ENCODE measurements at regions of chr1 and their contacts with region 1.

Region 1: GRCh38 chr1:23664837-23665795 is 26.5 kb upstream of the RPL11 start:
- DNase-seq: no peak
- ATAC-seq: no peak
- H3K4me3 Mint-ChIP-seq: no peak overlapping the region
- H3K27ac Mint-ChIP-seq: no peak overlapping the region
- H3K4me1 Mint-ChIP-seq: peaks cover 4% of the 10 kb centered on the region
- H3K27me3 Mint-ChIP-seq: peaks cover 3% of the 10 kb centered on the region
- CTCF ChIP-seq: no peak

Region 2: DNA sequence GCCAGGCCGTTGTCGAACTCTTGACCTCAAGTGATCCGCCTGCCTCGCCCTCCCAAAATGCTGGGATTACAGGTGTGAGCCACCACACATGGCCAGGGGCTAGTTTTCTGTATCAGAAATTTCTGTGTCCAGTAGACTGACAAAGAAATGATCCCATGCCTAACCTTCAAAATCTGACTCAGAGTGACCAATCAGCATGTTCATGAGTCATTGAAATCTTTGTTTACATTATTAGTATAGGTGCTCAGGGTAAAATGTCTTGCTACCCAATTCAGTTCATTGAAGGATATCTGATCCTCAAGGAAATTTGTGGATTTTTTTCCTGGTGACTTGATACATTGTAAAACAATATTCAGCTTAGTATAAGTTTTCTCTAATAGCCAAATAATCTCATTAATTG is 1864.0 kb before region 1 on chr1:
- CTCF ChIA-PET with region 1: no interaction called
- POLR2A ChIA-PET with region 1: no interaction called
- intact Hi-C with region 1: no loop called
- DNase-seq: no peak
- ATAC-seq: no peak
- H3K4me3 Mint-ChIP-seq: no peak overlapping the region
- H3K27ac Mint-ChIP-seq: no peak overlapping the region
- H3K4me1 Mint-ChIP-seq: peaks cover 13% of the 10 kb centered on the region
- H3K27me3 Mint-ChIP-seq: no peaks in the 10 kb centered on the region
- CTCF ChIP-seq: no peak

Region 3: GRCh38 chr1:23216771-23217420 is 448.2 kb before region 1 on chr1:
- CTCF ChIA-PET with region 1: no interaction called
- POLR2A ChIA-PET with region 1: no interaction called
- intact Hi-C with region 1: loop called (anchors 10 kb)
- DNase-seq: peak; percentile 41
- ATAC-seq: peak; percentile 21
- H3K4me3 Mint-ChIP-seq: no peak overlapping the region
- H3K27ac Mint-ChIP-seq: no peak overlapping the region
- H3K4me1 Mint-ChIP-seq: peaks cover 6% of the 10 kb centered on the region
- H3K27me3 Mint-ChIP-seq: peaks cover 66% of the 10 kb centered on the region
- CTCF ChIP-seq: no peak